PC-3 (cell line): ENCODE measurements at regions of chr19 and their contacts with region 1.

Region 1: DNA sequence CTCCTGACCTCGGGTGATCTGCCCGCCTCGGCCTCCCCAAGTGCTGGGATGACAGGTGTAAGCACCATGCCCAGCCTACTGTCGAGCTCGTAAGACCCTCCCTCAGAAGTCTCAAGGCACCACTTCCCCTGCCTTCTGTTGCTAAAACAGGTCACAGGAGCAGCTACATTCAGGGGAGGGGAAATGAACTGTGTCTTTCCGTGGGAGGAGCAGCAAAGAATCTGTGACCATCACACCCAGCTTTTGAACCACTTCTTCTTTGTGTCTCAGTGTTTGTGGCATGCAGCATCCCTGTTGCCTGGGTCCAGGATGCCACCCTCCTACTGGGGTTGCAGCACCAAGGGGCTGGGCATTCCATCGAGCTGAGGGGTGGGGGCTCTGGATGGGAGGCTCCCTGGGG is 7.7 kb upstream of the CSNK1G2 start:
- DNase-seq: no peak
- ATAC-seq: no peak
- H3K4me3 ChIP-seq: no peak overlapping the region
- H3K27ac ChIP-seq: no peak overlapping the region
- H3K4me1 ChIP-seq: peaks cover 8% of the 10 kb centered on the region; the same call in 1 of the 2 replicates
- H3K27me3 ChIP-seq: no peaks in the 10 kb centered on the region
- CTCF ChIP-seq: no peak

Region 2: DNA sequence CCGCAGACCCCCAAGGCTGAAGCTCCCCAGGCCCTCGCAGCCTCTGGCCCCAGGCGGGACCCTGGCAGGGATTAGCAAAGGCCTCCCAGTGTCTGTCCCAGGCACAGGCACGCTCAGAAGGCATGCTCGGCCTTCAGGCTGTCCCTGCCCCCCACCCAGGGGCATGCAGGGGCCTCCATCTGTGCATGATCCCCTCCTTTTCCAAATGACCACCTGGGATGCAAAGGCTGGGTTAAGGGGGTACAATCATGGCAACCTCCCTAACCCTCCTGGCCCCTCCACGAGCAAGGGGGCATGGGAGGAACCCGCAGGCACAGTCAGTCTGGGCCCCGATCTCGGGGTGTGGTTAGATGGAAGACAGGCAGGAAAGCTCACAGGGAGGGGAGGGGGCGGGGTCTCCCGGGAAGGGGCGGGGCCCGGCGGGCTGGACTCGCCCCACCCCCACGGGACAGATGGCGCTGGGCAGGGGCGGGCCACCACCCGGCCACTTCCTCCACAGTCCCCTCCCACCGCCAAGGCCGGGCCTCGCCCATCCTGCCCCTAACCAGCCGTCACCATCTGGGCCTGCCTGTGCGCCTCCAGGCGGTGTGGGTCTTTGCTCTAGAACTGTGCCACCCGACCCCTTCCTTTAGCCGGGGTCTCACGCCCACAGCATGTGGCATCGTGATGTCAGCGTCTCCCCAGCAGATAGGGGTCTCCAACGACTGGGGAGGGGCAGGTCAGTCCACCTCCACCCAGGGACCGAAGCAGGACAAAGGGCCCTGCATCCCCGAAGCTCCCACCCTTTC is 78.0 kb before region 1 on chr19:
- CTCF ChIA-PET with region 1: no interaction called
- POLR2A ChIA-PET with region 1: no interaction called
- intact Hi-C with region 1: no loop called
- DNase-seq: peak; percentile 38
- ATAC-seq: peak; percentile 60
- H3K4me3 ChIP-seq: no peak overlapping the region
- H3K27ac ChIP-seq: no peak overlapping the region
- H3K4me1 ChIP-seq: peaks cover 9% of the 10 kb centered on the region; the same call in 1 of the 2 replicates
- H3K27me3 ChIP-seq: no peaks in the 10 kb centered on the region
- CTCF ChIP-seq: no peak

Region 3: GRCh38 chr19:1893791-1894190 is 39.5 kb before region 1 on chr19:
- CTCF ChIA-PET with region 1: no interaction called
- POLR2A ChIA-PET with region 1: no interaction called
- intact Hi-C with region 1: no loop called
- DNase-seq: no peak
- ATAC-seq: no peak
- H3K4me3 ChIP-seq: no peak overlapping the region
- H3K27ac ChIP-seq: no peak overlapping the region
- H3K4me1 ChIP-seq: no peaks in the 10 kb centered on the region
- H3K27me3 ChIP-seq: no peaks in the 10 kb centered on the region
- CTCF ChIP-seq: no peak

Region 4: GRCh38 chr19:1910169-1910568 is 23.1 kb before region 1 on chr19:
- CTCF ChIA-PET with region 1: no interaction called
- POLR2A ChIA-PET with region 1: no interaction called
- intact Hi-C with region 1: no loop called
- DNase-seq: no peak
- ATAC-seq: no peak
- H3K4me3 ChIP-seq: no peak overlapping the region
- H3K27ac ChIP-seq: no peak overlapping the region
- H3K4me1 ChIP-seq: peaks cover 18% of the 10 kb centered on the region
- H3K27me3 ChIP-seq: no peaks in the 10 kb centered on the region
- CTCF ChIP-seq: no peak

Region 5: DNA sequence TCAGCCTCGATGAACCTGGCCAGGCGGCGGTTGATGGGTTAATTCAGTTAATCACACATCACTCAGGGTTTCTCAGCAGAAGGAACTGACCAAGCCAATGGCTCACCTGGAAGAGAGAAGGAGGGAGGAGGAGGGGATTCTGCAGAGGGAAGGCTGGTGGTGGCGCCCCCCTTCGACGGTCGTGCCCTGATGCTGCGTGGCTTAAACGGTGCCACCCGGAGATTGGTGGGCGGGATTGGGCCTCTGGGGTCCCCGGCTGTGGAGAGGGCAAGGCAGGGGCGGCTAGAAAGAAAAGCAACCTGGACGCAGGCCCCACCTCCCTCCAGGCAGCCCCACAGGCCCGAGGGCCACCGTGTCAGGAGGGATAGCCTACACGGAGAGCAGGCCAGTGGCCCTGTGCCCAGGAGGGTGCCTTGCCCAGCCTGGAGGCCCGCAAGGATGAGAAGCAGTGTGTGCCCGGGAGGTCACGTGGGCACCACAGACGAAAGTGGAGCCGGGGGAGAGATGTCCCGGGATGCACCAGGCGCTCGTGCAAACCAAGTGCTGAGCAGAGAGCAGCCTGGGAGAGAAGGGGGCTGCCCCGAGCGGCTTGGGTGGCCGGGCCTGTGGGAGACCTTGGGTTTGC is 23.7 kb after region 1 on chr19:
- CTCF ChIA-PET with region 1: no interaction called
- POLR2A ChIA-PET with region 1: no interaction called
- intact Hi-C with region 1: no loop called
- DNase-seq: no peak
- ATAC-seq: no peak
- H3K4me3 ChIP-seq: no peak overlapping the region
- H3K27ac ChIP-seq: no peak overlapping the region
- H3K4me1 ChIP-seq: no peaks in the 10 kb centered on the region
- H3K27me3 ChIP-seq: no peaks in the 10 kb centered on the region
- CTCF ChIP-seq: no peak

Region 6: GRCh38 chr19:1970003-1970805 is 37.0 kb after region 1 on chr19:
- CTCF ChIA-PET with region 1: no interaction called
- POLR2A ChIA-PET with region 1: no interaction called
- intact Hi-C with region 1: loop called (anchors 5 kb)
- DNase-seq: peak; percentile 79
- ATAC-seq: peak; percentile 90
- H3K4me3 ChIP-seq: no peak overlapping the region
- H3K27ac ChIP-seq: peak overlapping the region; percentile 87
- H3K4me1 ChIP-seq: peaks cover 23% of the 10 kb centered on the region
- H3K27me3 ChIP-seq: no peaks in the 10 kb centered on the region
- CTCF ChIP-seq: no peak